ENCODE measurements at regions of chr15 and their contacts with region 1.

Region 1: GRCh38 chr15:74842581-74843444 is at the start of gene ULK3:
- DNase-seq: peak; percentile 97
- ATAC-seq: peak; percentile 85
- H3K4me3 Mint-ChIP-seq: peak within 1 kb of the TSS; percentile 90
- H3K27ac Mint-ChIP-seq: peak within 1 kb of the TSS; percentile 90
- H3K4me1 Mint-ChIP-seq: peaks cover 45% of the 10 kb centered on the region
- H3K27me3 Mint-ChIP-seq: no peaks in the 10 kb centered on the region
- total RNA-seq, gene ULK3: 40.3 to 45.2 TPM

Region 2: DNA sequence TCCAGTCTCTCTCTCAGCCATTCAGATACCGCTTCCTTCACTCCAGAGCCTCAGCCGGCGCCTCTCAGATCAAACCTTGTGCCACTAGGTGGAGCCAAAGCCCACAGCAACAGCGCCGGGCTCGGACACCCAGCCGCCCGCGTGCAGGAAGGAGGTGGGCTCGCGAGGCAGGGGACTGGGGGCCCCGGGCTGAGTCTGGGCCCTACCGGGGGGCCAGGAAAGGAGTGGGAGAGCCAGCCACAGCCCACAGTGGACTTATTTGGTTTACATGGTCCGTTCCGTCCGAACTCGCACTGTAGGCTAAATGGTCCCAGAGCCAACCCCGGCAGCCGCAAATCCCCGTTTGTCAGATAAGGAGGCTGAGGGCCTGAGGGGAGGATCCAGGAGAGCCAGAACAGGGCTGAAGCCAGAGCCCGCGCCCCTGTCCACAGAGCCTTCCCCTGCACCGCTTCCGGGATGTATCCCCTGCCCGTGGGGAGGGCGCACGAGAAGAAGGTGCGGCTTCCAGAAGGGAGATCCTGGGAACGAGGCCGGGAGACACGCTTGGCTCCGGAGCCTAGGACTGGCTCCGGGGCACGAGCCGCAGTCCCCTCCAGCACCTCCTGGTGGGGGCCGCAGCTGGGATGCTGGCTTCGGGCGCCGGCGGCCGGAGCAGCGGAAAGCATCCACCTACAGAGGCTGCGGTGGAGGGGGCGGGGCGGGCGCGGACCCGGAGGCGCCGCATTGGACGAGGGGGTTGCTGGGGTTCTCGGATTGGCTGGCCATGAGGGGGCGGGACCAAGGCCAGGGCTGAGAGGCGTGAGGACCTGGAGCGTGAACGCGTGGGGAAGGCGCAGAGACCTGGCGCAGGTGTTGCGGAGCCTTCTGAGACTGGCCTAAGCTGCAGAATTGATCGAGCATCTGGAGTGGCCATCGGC is 468.8 kb before region 1 on chr15:
- CTCF ChIA-PET with region 1: no interaction called
- POLR2A ChIA-PET with region 1: no interaction called
- intact Hi-C with region 1: loop called in 1 of 2 experiments (anchors 5 kb)
- DNase-seq: peak; percentile 97
- ATAC-seq: peak; percentile 84
- H3K4me3 Mint-ChIP-seq: peak overlapping the region; percentile 76
- H3K27ac Mint-ChIP-seq: no peak overlapping the region
- H3K4me1 Mint-ChIP-seq: peaks cover 31% of the 10 kb centered on the region
- H3K27me3 Mint-ChIP-seq: peaks cover 7% of the 10 kb centered on the region

Region 3: GRCh38 chr15:74695597-74696397 is 147.0 kb before region 1 on chr15 and contains the start of gene EDC3:
- CTCF ChIA-PET with region 1: interaction called, 3 read pairs
- POLR2A ChIA-PET with region 1: no interaction called
- intact Hi-C with region 1: loop called in 1 of 2 experiments (anchors 1 kb)
- DNase-seq: peak; percentile 92
- ATAC-seq: peak; percentile 91
- H3K4me3 Mint-ChIP-seq: peak within 1 kb of the TSS; percentile 98
- H3K27ac Mint-ChIP-seq: peak within 1 kb of the TSS; percentile 99
- H3K4me1 Mint-ChIP-seq: peaks cover 27% of the 10 kb centered on the region
- H3K27me3 Mint-ChIP-seq: no peaks in the 10 kb centered on the region
- total RNA-seq, gene EDC3: 44.7 to 45.0 TPM

Region 4: DNA sequence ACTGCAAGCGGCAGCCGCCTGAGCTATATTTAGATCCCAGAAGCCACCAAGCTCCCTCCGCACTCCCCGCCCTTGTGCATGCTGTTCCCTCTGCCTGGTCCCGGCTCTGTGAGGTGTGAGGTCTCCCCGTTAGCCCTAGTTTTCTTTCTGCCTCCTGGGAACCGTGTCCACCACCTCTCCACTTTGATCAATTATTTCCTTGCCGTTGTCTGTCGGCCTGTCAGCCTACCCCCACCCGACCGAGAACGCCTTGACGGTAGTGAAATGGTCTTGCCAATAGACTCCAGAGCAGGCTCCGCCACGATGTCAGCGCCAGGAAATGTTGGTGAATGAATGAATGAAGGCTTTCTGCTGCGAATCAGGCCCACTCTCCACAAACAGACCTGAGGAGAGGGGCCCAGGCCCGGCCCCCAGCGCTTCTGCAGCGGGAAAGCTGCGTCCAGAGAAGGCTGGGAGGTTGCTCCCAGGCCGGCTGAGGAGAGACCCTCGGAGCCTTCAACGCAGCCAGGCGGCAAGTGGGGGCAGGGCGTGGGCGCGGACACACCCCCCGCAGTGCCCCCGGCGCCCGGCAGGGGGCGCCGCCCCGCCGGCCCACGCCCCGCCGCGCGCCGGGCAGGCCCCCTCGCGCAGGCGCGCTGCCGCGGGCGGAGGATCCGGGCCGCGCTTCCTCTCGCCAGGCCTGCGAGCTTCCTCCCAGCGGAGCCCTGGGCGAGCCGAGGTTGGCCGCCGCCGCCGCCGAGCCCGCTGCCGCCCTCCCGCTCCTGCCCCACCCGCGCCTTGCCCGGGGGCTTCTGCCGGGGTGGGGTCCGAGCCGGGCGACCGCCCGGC is 61.2 kb before region 1 on chr15 and contains the start of gene CSK:
- CTCF ChIA-PET with region 1: interaction called, 4 read pairs
- POLR2A ChIA-PET with region 1: no interaction called
- intact Hi-C with region 1: loop called (anchors 2 kb)
- DNase-seq: peak; percentile 84
- ATAC-seq: peak; percentile 27
- H3K4me3 Mint-ChIP-seq: peak within 1 kb of the TSS; percentile 89
- H3K27ac Mint-ChIP-seq: peak within 1 kb of the TSS; percentile 100
- H3K4me1 Mint-ChIP-seq: peaks cover 56% of the 10 kb centered on the region
- H3K27me3 Mint-ChIP-seq: no peaks in the 10 kb centered on the region
- total RNA-seq, gene CSK: 229 to 272 TPM

Region 5: GRCh38 chr15:74873036-74873755 is 30.4 kb after region 1 on chr15 and contains the start of gene SCAMP2:
- CTCF ChIA-PET with region 1: interaction called, 5 read pairs
- POLR2A ChIA-PET with region 1: interaction called, 4 read pairs
- intact Hi-C with region 1: loop called (anchors 1 kb)
- DNase-seq: peak; percentile 94
- ATAC-seq: peak; percentile 84
- H3K4me3 Mint-ChIP-seq: peak within 1 kb of the TSS; percentile 87
- H3K27ac Mint-ChIP-seq: peak within 1 kb of the TSS; percentile 87
- H3K4me1 Mint-ChIP-seq: peaks cover 48% of the 10 kb centered on the region
- H3K27me3 Mint-ChIP-seq: no peaks in the 10 kb centered on the region
- total RNA-seq, gene SCAMP2: 61.6 to 83.4 TPM

Region 6: GRCh38 chr15:74956648-74957300 is 114.0 kb after region 1 on chr15 and contains the start of gene RPP25:
- CTCF ChIA-PET with region 1: no interaction called
- POLR2A ChIA-PET with region 1: no interaction called
- intact Hi-C with region 1: loop called in 1 of 2 experiments (anchors 1 kb)
- DNase-seq: peak; percentile 85
- ATAC-seq: peak; percentile 84
- H3K4me3 Mint-ChIP-seq: peak within 1 kb of the TSS; percentile 65
- H3K27ac Mint-ChIP-seq: no peak within 1 kb of the TSS
- H3K4me1 Mint-ChIP-seq: peaks cover 46% of the 10 kb centered on the region
- H3K27me3 Mint-ChIP-seq: peaks cover 25% of the 10 kb centered on the region
- total RNA-seq, gene RPP25: 5.4 to 6.2 TPM

Region 7: DNA sequence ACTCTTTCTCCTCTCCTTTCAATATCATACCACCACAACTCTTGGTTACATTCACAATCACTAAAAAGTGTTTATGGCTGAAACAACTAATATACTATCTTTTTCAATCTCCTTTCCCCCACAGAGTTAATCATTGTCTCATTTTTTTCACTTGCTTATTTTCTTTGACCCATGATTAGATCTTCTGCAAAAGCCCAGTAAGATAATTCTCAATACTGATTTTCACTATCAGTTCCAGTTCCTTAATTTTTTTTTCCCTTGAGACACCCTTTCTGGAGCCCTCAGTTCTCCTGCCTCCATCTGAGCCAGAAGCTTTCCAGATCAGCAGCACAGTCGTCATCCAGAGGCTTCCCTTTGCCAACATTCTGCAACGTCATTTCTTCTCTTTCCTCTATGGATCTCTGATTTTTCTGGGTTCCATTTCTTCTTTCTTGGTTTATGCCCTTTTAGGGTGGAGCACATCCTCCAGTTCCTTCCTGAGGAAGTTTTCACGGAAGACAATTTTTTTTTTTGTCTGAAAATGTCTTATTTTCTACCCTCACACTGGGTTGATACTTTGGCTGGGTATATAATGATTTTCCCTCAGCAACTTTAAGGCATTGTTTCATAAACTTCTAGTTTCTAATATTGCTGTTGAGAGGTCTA is 270.2 kb after region 1 on chr15:
- CTCF ChIA-PET with region 1: no interaction called
- POLR2A ChIA-PET with region 1: no interaction called
- intact Hi-C with region 1: no loop called
- DNase-seq: no peak
- ATAC-seq: no peak
- H3K4me3 Mint-ChIP-seq: no peak overlapping the region
- H3K27ac Mint-ChIP-seq: no peak overlapping the region
- H3K4me1 Mint-ChIP-seq: peaks cover 18% of the 10 kb centered on the region
- H3K27me3 Mint-ChIP-seq: peaks cover 26% of the 10 kb centered on the region

Measured in activated CD4-positive, alpha-beta T cell treated with anti-CD3 and anti-CD28 coated beads for 36 hours (primary cell).